Posterior vena cava (tissue), 2 donors: ENCODE measurements at regions of chr1 and their contacts with region 1.

Region 1: DNA sequence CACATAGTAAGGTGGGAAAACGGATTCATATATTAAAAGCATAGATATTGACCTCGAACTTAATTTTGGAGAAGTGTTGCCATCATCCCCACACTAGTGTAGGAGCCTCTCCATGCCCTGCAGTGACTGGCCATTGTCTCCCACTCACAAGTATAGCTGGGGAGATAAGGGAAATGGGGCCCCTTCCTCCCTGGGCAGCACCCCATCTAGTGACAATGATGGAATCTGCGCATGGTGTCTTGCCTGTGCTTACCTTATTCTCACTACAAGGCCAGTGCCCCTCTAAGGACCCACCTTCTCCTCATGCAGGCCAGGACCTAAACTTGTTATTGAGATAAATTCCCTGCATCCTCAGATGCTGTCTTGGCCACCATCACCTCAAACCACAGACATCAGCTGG is 374.9 kb downstream of the NTNG1 start:
- DNase-seq: no peak

Region 2: DNA sequence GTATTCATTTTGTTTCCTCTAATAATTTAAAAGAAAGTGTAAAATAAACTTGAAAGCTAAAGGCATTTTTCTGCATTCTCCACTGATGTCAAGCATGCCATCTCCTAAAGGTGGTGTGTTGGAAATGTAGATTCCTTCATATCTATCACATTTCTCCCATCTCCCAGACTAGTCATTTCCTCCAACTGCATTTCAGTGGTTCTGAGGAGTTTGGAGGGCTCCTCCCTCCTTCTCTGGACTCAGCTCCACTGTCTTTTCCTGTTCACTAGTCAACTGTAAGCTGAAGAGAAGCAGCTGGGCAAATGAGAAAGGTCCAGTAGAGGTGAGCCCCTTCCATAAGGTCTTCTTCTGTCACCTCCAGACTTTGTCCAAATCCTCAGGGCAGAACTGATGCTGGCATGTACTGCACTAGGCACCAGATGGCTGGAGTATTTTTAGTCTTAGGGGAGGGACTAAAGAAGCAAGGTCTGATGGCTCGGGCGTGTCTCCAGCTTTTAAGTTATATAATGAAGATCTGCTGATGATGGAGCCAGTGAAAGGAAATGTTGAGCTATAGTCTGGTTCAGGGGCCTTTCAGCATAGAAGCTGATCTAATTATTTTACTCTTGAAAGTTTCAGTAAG is 188.8 kb before region 1 on chr1:
- intact Hi-C with region 1: no loop called
- DNase-seq: no peak

Region 3: GRCh38 chr1:107389410-107390396 is 126.0 kb before region 1 on chr1:
- intact Hi-C with region 1: no loop called
- DNase-seq: no peak

Region 4: GRCh38 chr1:107474877-107475612 is 40.7 kb before region 1 on chr1:
- intact Hi-C with region 1: no loop called
- DNase-seq: no peak

Region 5: GRCh38 chr1:107739646-107740045 is 223.9 kb after region 1 on chr1:
- intact Hi-C with region 1: loop called in 1 of 2 experiments (anchors 5 kb)
- DNase-seq: no peak